Activated CD4-positive, alpha-beta T cell treated with anti-CD3 and anti-CD28 coated beads for 36 hours (primary cell): ENCODE measurements at regions of chr1 and their contacts with region 1.

Region 1: GRCh38 chr1:67332653-67333529 is 25.2 kb downstream of the IL12RB2 start:
- DNase-seq: peak; percentile 62
- ATAC-seq: peak; percentile 86
- H3K4me3 Mint-ChIP-seq: peak overlapping the region; percentile 44
- H3K27ac Mint-ChIP-seq: peak overlapping the region; percentile 87
- H3K4me1 Mint-ChIP-seq: peaks cover 79% of the 10 kb centered on the region
- H3K27me3 Mint-ChIP-seq: no peaks in the 10 kb centered on the region

Region 2: GRCh38 chr1:67174716-67175284 is 158.1 kb before region 1 on chr1:
- CTCF ChIA-PET with region 1: interaction called, 3 read pairs
- POLR2A ChIA-PET with region 1: interaction called, 10 read pairs
- intact Hi-C with region 1: loop called (anchors 1 kb)
- DNase-seq: peak; percentile 61
- ATAC-seq: peak; percentile 70
- H3K4me3 Mint-ChIP-seq: peak overlapping the region; percentile 25
- H3K27ac Mint-ChIP-seq: peak overlapping the region; percentile 94
- H3K4me1 Mint-ChIP-seq: peaks cover 68% of the 10 kb centered on the region
- H3K27me3 Mint-ChIP-seq: no peaks in the 10 kb centered on the region

Region 3: GRCh38 chr1:67285780-67286488 is 47.0 kb before region 1 on chr1:
- CTCF ChIA-PET with region 1: interaction called, 5 read pairs
- POLR2A ChIA-PET with region 1: interaction called, 5 read pairs
- intact Hi-C with region 1: loop called (anchors 1 to 2 kb)
- DNase-seq: peak; percentile 31
- ATAC-seq: peak; percentile 96
- H3K4me3 Mint-ChIP-seq: no peak overlapping the region
- H3K27ac Mint-ChIP-seq: peak overlapping the region; percentile 85
- H3K4me1 Mint-ChIP-seq: peaks cover 44% of the 10 kb centered on the region
- H3K27me3 Mint-ChIP-seq: peaks cover 2% of the 10 kb centered on the region

Region 4: DNA sequence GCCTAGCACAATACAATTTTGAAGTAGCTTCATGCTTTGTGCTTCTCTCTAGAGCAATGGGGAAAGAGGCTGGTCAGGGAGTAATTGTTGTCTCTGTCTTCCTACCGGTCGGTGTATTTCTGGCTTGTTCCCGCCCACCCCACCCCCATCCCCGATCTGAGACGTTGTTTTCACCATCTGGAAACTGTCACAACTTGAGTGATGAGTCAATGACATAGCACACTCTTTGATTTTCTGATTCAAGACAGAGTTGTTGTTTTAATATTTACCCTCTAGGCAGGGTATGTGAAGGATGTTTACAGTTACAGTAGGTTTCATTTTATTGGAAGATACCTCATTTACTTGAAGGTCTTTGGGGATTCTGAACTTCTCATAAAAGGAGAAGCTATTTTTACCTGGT is 18.2 kb before region 1 on chr1:
- CTCF ChIA-PET with region 1: interaction called, 12 read pairs
- POLR2A ChIA-PET with region 1: interaction called, 5 read pairs
- intact Hi-C with region 1: loop called (anchors 1 kb)
- DNase-seq: peak; percentile 38
- ATAC-seq: peak; percentile 76
- H3K4me3 Mint-ChIP-seq: peak overlapping the region; percentile 38
- H3K27ac Mint-ChIP-seq: peak overlapping the region; percentile 89
- H3K4me1 Mint-ChIP-seq: peaks cover 43% of the 10 kb centered on the region
- H3K27me3 Mint-ChIP-seq: no peaks in the 10 kb centered on the region

Region 5: DNA sequence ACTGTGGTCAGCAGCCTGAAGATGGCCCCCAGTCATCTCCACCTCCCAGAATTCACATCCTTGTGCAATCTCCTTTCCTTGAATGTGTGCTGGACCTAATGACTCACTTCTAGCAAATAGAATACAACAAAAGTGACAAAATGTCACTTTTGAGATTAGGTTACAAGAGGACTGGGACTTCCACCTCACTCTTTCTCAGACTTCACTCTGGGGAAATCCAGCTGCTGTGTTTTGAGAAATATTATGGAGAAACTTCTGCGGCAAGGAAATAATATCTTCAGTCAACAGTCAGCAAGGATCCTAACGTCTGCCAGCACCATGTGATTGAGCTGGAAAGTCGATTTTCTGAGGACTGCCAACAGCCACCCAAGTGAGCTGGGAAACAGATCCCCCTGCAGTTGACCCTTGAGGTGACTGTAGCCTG is 281.6 kb after region 1 on chr1:
- CTCF ChIA-PET with region 1: no interaction called
- POLR2A ChIA-PET with region 1: no interaction called
- intact Hi-C with region 1: no loop called
- DNase-seq: no peak
- ATAC-seq: no peak
- H3K4me3 Mint-ChIP-seq: no peak overlapping the region
- H3K27ac Mint-ChIP-seq: no peak overlapping the region
- H3K4me1 Mint-ChIP-seq: no peaks in the 10 kb centered on the region
- H3K27me3 Mint-ChIP-seq: peaks cover 15% of the 10 kb centered on the region